Dendritic cell treated with granulocyte-macrophage colony-stimulating factor and Interleukin-4, amounts not matched to agents 40 ng/mL and 50 ng/mL, for 4 days (primary cell): ENCODE measurements at regions of chr14 and their contacts with region 1.

Region 1: DNA sequence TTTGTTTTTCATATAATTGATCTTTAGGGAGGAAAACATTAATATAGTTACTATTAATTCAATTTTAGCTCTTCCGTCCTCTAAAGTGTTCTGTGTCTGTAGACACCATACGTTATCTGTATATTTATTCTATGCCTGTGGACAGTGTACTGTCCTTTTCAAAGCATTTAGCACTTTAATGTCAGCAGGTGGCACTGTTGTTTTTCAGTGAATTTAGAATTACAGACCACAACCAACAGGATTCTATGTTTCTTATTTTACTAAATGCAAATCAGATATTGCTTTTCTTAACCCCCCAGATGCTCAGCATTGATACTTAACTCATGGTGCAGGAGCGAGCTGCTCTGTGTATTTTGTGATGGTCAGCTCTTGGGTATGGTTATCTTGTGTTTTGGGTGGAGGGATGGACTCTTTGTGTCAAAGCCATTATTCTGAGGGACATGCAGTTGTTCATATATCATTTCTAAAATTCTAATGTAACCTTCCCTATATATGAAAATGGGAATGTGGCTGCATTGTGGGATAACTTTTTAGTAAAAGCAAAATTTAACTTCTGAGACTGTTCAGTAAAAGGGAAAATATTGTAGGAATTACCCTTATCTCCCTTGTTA is 65.2 kb downstream of the PAPOLA start:
- H3K4me3 Mint-ChIP-seq: no peak overlapping the region
- H3K27ac Mint-ChIP-seq: no peak overlapping the region
- H3K4me1 Mint-ChIP-seq: no peaks in the 10 kb centered on the region
- H3K27me3 Mint-ChIP-seq: no peaks in the 10 kb centered on the region

Region 2: GRCh38 chr14:96525452-96525851 is 41.9 kb before region 1 on chr14:
- intact Hi-C with region 1: loop called (anchors 5 kb)
- H3K4me3 Mint-ChIP-seq: no peak overlapping the region
- H3K27ac Mint-ChIP-seq: no peak overlapping the region
- H3K4me1 Mint-ChIP-seq: no peaks in the 10 kb centered on the region
- H3K27me3 Mint-ChIP-seq: no peaks in the 10 kb centered on the region

Region 3: GRCh38 chr14:96614481-96614881 is 47.1 kb after region 1 on chr14:
- intact Hi-C with region 1: no loop called
- H3K4me3 Mint-ChIP-seq: no peak overlapping the region
- H3K27ac Mint-ChIP-seq: no peak overlapping the region
- H3K4me1 Mint-ChIP-seq: no peaks in the 10 kb centered on the region
- H3K27me3 Mint-ChIP-seq: peaks cover 1% of the 10 kb centered on the region

Region 4: DNA sequence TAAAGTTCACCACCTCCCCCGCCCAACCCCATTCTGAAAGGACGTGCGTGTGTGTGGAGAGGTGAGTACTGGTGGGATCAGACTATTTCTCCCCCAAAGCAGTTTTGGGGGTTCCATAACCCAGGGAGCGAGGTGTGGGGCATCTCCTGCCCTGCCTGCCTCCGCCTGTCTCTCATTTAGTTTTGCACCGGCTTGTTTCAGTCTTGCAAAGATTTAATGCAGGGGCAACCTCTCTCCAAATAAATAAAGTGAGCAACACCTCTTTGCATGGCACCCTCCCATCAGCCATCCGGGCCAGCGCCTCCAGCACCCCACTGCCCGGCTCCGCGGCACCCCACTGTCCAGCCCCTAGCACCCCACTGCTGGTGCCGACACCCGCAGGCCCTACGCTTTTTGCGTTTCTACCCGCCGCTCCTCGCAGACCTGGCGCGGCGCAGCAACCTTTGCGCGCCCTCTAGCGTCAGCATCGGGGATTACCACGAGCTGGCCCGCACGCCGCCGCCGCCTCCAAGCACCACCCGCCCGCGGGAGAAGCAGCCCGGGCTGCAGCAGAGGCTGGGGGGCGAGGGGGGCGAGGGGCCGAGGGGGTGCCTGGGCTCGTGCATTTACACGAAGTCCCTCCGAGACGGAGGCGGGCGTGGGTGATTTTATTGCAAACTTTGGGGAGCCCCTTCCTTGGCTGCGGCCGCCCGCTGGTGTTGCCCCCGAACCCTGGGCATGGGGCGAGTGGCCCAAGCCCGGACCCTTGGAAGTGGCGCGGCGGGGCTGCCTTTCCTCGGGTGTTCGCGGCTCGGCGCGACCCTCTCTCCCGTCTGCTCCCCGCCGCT is 174.0 kb after region 1 on chr14:
- intact Hi-C with region 1: loop called (anchors 5 kb)
- H3K4me3 Mint-ChIP-seq: peak overlapping the region; percentile 52
- H3K27ac Mint-ChIP-seq: no peak overlapping the region
- H3K4me1 Mint-ChIP-seq: peaks cover 5% of the 10 kb centered on the region
- H3K27me3 Mint-ChIP-seq: peaks cover 70% of the 10 kb centered on the region

Region 5: GRCh38 chr14:96852823-96853422 is 285.5 kb after region 1 on chr14:
- intact Hi-C with region 1: loop called (anchors 5 kb)
- H3K4me3 Mint-ChIP-seq: no peak overlapping the region
- H3K27ac Mint-ChIP-seq: no peak overlapping the region
- H3K4me1 Mint-ChIP-seq: no peaks in the 10 kb centered on the region
- H3K27me3 Mint-ChIP-seq: no peaks in the 10 kb centered on the region

Region 6: DNA sequence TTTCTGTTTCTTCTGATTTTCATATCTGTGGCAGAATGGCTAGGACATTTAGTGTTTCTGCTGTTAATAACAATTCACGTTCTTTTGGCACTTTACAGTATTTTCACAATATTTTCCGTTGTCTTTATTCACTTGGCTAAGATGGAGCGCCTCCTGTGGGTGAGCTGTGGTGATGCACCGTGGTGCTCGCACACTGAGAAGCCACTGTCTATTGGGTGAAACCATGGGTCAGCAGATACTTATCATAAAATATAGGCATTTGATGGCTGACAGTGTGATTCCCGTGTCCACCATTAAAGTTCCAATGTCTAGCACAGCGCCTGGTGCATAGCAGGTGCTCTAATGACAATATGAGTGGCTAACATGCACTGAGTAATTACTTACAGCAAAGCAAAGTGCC is 371.6 kb after region 1 on chr14:
- intact Hi-C with region 1: loop called (anchors 5 kb)
- H3K4me3 Mint-ChIP-seq: no peak overlapping the region
- H3K27ac Mint-ChIP-seq: no peak overlapping the region
- H3K4me1 Mint-ChIP-seq: no peaks in the 10 kb centered on the region
- H3K27me3 Mint-ChIP-seq: peaks cover 1% of the 10 kb centered on the region